Mammary epithelial cell (primary cell): ENCODE measurements at regions of chr5 and their contacts with region 1.

Region 1: GRCh38 chr5:138575194-138576015 is at the start of gene HSPA9:
- DNase-seq: peak; percentile 99
- H3K4me3 ChIP-seq: peak within 1 kb of the TSS; percentile 81 to 95 (median 91)
- H3K27ac ChIP-seq: peak within 1 kb of the TSS; percentile 100
- H3K4me1 ChIP-seq: peaks cover 10% of the 10 kb centered on the region
- H3K27me3 ChIP-seq: no peaks in the 10 kb centered on the region
- CTCF ChIP-seq: peak in 1 of 2 donors; percentile 14
- total RNA-seq, gene HSPA9: 301 to 332 TPM

Region 2: GRCh38 chr5:138542956-138543729 is 32.3 kb before region 1 on chr5 and contains the start of gene ETF1:
- CTCF ChIA-PET with region 1: no interaction called
- dilution Hi-C with region 1: no loop called
- in situ Hi-C with region 1: no loop called
- intact Hi-C with region 1: loop called (anchors 1 kb)
- DNase-seq: peak; percentile 100
- H3K4me3 ChIP-seq: peak within 1 kb of the TSS; percentile 80 to 96 (median 82)
- H3K27ac ChIP-seq: peak within 1 kb of the TSS; percentile 100
- H3K4me1 ChIP-seq: peaks cover 36% of the 10 kb centered on the region
- H3K27me3 ChIP-seq: no peaks in the 10 kb centered on the region
- CTCF ChIP-seq: no peak
- total RNA-seq, gene ETF1: 167 to 200 TPM

Region 3: GRCh38 chr5:138601444-138601843 is 26.0 kb after region 1 on chr5:
- CTCF ChIA-PET with region 1: no interaction called
- dilution Hi-C with region 1: no loop called
- in situ Hi-C with region 1: no loop called
- intact Hi-C with region 1: no loop called
- DNase-seq: peak; percentile 89
- H3K4me3 ChIP-seq: no peak overlapping the region
- H3K27ac ChIP-seq: no peak overlapping the region
- H3K4me1 ChIP-seq: peaks cover 10% of the 10 kb centered on the region
- H3K27me3 ChIP-seq: no peaks in the 10 kb centered on the region
- CTCF ChIP-seq: no peak

Region 4: GRCh38 chr5:138632900-138633489 is 57.6 kb after region 1 on chr5:
- CTCF ChIA-PET with region 1: interaction called, 4 read pairs
- dilution Hi-C with region 1: no loop called
- in situ Hi-C with region 1: no loop called
- intact Hi-C with region 1: loop called (anchors 1 kb)
- DNase-seq: peak; percentile 70
- H3K4me3 ChIP-seq: no peak overlapping the region
- H3K27ac ChIP-seq: no peak overlapping the region
- H3K4me1 ChIP-seq: no peaks in the 10 kb centered on the region
- H3K27me3 ChIP-seq: no peaks in the 10 kb centered on the region
- CTCF ChIP-seq: peak; percentile 33 to 57

Region 5: DNA sequence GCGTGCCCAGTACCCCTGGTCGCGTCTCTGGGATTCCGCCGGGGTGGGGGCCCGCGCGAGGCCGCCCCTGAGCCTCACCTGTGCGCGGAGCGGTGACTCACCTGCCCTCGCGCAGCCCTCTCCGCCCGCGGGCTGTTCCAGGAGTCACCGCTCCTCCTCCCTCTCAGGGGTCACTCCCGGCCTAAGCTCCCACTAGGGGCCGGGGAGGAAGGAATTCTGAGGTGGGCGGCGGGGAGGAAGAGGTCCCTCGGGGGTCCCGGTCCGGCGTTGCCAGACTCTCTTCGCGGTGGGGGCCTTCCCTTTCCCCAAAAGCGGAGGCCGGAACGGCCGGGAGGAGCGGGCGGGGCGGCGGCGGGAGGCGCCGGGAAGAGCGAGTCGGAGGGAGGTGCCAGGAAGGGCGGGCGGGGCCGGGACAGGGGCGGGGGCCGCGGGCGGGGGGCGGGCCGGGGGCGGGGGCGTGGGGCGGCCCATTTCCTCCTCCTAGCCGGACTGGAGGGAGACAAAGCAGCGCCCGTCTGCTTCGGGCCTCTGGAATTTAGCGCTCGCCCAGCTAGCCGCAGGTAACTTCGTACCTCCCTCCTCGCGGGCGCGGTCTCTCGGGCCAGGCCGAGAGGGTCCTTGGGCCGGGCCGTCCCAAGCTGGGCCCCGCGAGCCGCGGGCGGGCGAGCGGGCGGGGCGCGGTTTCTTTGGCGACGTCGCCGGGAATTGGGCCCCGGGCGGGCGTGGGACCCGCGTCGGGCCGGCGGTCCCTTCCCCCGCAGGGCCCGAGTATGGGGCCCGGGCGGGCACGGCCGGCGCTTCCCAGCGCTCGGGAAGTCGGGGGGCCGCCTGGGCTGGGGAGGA is 177.8 kb after region 1 on chr5 and contains the start of gene CTNNA1:
- CTCF ChIA-PET with region 1: no interaction called
- dilution Hi-C with region 1: no loop called
- in situ Hi-C with region 1: loop called in 1 of 2 experiments (anchors 25 kb)
- intact Hi-C with region 1: loop called (anchors 5 kb)
- DNase-seq: peak; percentile 83
- H3K4me3 ChIP-seq: peak within 1 kb of the TSS; percentile 88 to 99 (median 94)
- H3K27ac ChIP-seq: peak within 1 kb of the TSS; percentile 94
- H3K4me1 ChIP-seq: peaks cover 11% of the 10 kb centered on the region
- H3K27me3 ChIP-seq: no peaks in the 10 kb centered on the region
- CTCF ChIP-seq: no peak
- total RNA-seq, gene CTNNA1: 348 to 366 TPM

Region 6: DNA sequence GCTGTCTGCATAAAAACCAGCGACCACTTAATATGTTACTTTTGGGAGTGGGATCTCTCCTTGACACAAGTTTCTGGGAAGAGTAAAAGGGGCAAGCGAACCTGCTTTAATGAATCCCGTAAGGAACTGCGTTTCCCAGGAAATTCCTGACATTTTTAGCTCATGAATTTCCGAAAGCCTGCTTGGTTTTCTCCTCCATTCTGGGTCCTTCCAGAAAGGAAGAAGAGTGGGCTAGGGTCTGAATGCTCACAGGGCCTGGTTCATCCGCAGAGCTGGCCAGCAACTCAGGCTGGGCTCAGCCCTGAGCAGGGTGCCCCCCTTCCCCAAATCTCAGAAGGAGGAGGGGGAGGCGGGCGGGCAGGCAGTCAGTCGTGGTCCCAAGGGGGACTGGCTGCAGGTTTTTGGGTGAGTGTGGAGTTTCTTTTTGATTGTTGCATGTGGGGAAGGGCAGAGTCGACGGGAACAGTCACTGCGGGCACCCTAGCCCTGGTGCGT is 1537.3 kb after region 1 on chr5:
- CTCF ChIA-PET with region 1: interaction called, 12 read pairs
- dilution Hi-C with region 1: no loop called
- in situ Hi-C with region 1: no loop called
- intact Hi-C with region 1: no loop called
- DNase-seq: no peak
- H3K4me3 ChIP-seq: peak overlapping the region; percentile 66 to 86 (median 82)
- H3K27ac ChIP-seq: no peak overlapping the region
- H3K4me1 ChIP-seq: peaks cover 24% of the 10 kb centered on the region
- H3K27me3 ChIP-seq: no peaks in the 10 kb centered on the region
- CTCF ChIP-seq: no peak